SK-N-SH (cell line): ENCODE measurements at regions of chr2 and their contacts with region 1.

Region 1: GRCh38 chr2:174697255-174697654 is 67.0 kb downstream of the CHRNA1 start:
- DNase-seq: peak; percentile 80
- H3K4me3 ChIP-seq: no peak overlapping the region; a peak in 1 of 4 replicates
- H3K27ac ChIP-seq: no peak overlapping the region
- H3K4me1 ChIP-seq: peaks cover 0 to 5% of the 10 kb centered on the region in 2 experiments; a peak in 1 of 4 replicates
- H3K27me3 ChIP-seq: no peaks in the 10 kb centered on the region
- CTCF ChIP-seq: peak; percentile 89
- EP300 ChIP-seq: no peak
- RAD21 ChIP-seq: peak; percentile 78

Region 2: GRCh38 chr2:174577967-174578589 is 119.2 kb before region 1 on chr2:
- CTCF ChIA-PET with region 1: interaction called, 180 read pairs
- POLR2A ChIA-PET with region 1: no interaction called
- DNase-seq: peak; percentile 51
- H3K4me3 ChIP-seq: no peak overlapping the region
- H3K27ac ChIP-seq: peak overlapping the region; percentile 4 to 7; a peak in 3 of 4 replicates
- H3K4me1 ChIP-seq: no peaks in the 10 kb centered on the region; a peak in 2 of 4 replicates
- H3K27me3 ChIP-seq: no peaks in the 10 kb centered on the region
- CTCF ChIP-seq: peak; percentile 80
- EP300 ChIP-seq: no peak
- RAD21 ChIP-seq: peak; percentile 91

Region 3: GRCh38 chr2:174708713-174709112 is 11.5 kb after region 1 on chr2:
- CTCF ChIA-PET with region 1: interaction called, 55 read pairs
- POLR2A ChIA-PET with region 1: no interaction called
- DNase-seq: no peak
- H3K4me3 ChIP-seq: no peak overlapping the region
- H3K27ac ChIP-seq: no peak overlapping the region
- H3K4me1 ChIP-seq: no peaks in the 10 kb centered on the region
- H3K27me3 ChIP-seq: 0 out of 2 replicates have a peak, but pooled peaks cover 6% of the 10 kb centered on the region
- CTCF ChIP-seq: no peak
- EP300 ChIP-seq: no peak
- RAD21 ChIP-seq: no peak

Region 4: DNA sequence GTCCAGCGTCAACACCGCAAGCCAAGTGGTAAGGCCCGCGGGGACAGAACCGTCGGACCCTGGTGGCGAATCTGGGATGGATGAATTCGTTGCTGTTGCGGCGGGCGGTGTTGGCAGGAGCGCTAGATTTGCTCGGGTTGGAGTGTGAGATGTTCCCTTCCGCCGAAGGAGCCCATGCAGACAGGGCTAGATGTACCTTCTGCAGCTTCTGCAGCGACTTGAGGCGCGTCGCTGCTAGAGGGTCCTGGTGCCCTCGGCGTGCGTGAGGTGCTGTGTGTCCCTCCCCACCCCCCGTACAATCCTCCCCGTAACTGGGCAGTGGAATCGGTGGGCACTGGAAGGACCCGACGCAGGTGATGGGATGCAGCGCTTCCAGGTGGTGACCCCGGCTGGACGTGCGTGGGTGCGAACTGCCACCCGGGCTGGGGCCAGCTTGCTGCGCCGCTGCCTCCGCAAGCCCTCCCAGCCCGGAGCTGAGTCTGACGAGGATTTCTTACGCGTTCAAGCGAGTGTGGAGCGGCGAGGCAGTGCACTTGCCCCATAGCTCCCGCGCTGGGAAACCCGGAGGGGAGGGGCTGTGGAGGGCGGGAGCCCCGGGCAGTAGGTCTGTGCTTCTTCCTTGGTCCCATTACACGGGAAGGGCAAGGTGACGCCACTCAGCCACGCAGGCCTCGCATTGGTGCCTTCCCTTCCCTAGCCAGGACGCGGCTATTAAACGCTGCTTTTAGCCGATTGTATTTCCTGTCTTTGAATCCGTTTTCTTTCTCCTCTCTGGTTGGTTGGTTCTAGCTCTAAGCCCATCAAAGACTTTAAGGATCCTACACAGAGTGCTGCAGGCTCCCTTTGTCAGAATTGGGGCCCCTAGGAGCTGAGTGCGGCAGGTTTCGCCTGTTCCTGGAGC is 32.8 kb after region 1 on chr2:
- CTCF ChIA-PET with region 1: interaction called, 29 read pairs
- POLR2A ChIA-PET with region 1: no interaction called
- DNase-seq: peak; percentile 77
- H3K4me3 ChIP-seq: peak overlapping the region; percentile 40 to 50
- H3K27ac ChIP-seq: no peak overlapping the region
- H3K4me1 ChIP-seq: peaks cover 0 to 8% of the 10 kb centered on the region in 2 experiments; a peak in 1 of 4 replicates
- H3K27me3 ChIP-seq: peaks cover 21% of the 10 kb centered on the region; the same call in 1 of the 2 replicates
- CTCF ChIP-seq: no peak
- EP300 ChIP-seq: no peak
- RAD21 ChIP-seq: no peak

Region 5: DNA sequence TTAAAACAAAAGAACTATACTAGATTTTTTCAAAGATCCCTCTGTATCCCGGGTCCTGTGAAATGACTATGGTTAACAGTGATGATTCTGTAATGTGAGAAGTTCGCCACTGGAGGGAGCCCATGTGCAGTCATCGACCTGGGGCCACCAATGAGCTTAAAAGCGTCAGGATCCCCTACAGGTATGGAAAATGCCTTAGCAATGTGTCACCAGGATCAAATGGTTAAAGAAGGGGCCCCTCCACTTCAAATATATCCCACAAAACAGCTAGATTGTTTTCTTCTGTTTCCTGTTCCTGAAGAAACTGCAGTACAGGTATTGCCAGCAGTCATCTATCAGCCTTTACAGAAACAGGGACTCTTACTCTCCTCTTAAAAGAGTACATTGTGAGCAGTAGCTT is 51.7 kb after region 1 on chr2:
- CTCF ChIA-PET with region 1: interaction called, 23 read pairs
- POLR2A ChIA-PET with region 1: no interaction called
- DNase-seq: peak; percentile 77
- H3K4me3 ChIP-seq: no peak overlapping the region
- H3K27ac ChIP-seq: no peak overlapping the region
- H3K4me1 ChIP-seq: no peaks in the 10 kb centered on the region
- H3K27me3 ChIP-seq: no peaks in the 10 kb centered on the region
- CTCF ChIP-seq: peak; percentile 87
- EP300 ChIP-seq: no peak
- RAD21 ChIP-seq: peak; percentile 87

Region 6: DNA sequence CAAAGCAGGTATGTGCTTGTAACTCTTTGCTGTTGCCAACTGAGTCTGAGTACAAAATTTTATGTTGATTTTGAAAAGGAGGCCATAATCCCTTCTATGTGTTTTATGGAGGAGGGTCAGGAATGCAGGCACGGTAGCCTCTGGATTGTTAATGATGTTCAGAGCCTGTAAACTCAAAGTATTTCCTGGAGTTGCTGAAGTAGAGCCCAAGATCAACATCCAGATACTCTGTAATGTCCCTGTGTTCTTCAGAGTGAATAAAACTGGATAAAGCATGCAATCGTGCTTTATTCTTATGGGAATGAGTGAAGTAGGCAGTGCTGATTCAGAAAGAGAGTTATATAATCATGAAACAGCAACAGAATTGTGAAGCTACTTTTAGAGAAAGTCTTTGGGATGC is 128.8 kb after region 1 on chr2:
- CTCF ChIA-PET with region 1: no interaction called
- POLR2A ChIA-PET with region 1: no interaction called
- DNase-seq: no peak
- H3K4me3 ChIP-seq: no peak overlapping the region
- H3K27ac ChIP-seq: no peak overlapping the region
- H3K4me1 ChIP-seq: peaks cover 8 to 19% of the 10 kb centered on the region in 2 experiments; a peak in 2 of 4 replicates
- H3K27me3 ChIP-seq: no peaks in the 10 kb centered on the region
- CTCF ChIP-seq: no peak
- EP300 ChIP-seq: no peak
- RAD21 ChIP-seq: no peak

Region 7: DNA sequence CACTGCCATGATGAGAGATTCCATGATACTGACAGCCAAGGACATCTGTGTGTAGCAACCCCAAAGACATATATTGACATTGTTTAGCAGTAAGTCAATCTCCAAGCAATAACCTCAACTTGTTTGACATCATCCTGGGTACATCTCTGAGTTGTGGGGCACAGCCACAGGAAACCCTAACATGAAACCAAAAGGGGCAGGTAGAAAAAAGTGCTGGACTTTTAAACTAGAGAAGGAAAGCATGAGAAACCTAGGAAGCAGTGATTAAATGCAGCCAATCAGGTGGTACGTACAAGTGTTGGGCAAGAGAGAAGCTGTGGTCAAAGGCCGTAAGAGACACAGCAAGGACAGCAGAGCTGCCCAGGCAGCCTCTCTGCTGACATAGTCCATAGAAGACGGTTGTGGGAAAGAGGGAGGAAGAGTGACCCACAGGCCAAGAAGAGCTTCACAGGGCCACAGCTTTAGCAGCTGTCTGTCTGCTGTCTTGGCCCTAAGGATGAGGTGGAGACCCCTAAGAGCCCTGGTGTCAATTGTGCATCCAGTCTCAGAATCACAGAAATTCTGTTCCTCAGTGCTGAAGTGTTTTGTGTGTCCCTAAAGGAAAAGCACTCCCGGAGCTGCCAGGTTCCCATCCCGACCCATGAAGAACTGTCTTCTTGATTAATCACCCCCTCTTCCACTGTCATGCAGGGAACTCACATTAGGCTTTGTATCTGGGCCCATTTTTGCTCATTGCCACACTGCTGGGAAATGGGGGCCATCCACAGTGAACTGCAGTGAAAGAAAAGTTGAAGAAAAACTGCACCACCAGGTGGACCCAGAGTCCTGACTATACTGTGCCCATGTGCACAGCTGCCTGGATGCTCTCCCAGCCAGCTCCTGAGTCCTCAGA is 333.4 kb after region 1 on chr2:
- CTCF ChIA-PET with region 1: interaction called, 12 read pairs
- POLR2A ChIA-PET with region 1: no interaction called
- DNase-seq: peak; percentile 33
- H3K4me3 ChIP-seq: no peak overlapping the region; a peak in 1 of 4 replicates
- H3K27ac ChIP-seq: no peak overlapping the region
- H3K4me1 ChIP-seq: no peaks in the 10 kb centered on the region
- H3K27me3 ChIP-seq: no peaks in the 10 kb centered on the region
- CTCF ChIP-seq: peak; percentile 50
- EP300 ChIP-seq: no peak
- RAD21 ChIP-seq: peak; percentile 75

Region 8: DNA sequence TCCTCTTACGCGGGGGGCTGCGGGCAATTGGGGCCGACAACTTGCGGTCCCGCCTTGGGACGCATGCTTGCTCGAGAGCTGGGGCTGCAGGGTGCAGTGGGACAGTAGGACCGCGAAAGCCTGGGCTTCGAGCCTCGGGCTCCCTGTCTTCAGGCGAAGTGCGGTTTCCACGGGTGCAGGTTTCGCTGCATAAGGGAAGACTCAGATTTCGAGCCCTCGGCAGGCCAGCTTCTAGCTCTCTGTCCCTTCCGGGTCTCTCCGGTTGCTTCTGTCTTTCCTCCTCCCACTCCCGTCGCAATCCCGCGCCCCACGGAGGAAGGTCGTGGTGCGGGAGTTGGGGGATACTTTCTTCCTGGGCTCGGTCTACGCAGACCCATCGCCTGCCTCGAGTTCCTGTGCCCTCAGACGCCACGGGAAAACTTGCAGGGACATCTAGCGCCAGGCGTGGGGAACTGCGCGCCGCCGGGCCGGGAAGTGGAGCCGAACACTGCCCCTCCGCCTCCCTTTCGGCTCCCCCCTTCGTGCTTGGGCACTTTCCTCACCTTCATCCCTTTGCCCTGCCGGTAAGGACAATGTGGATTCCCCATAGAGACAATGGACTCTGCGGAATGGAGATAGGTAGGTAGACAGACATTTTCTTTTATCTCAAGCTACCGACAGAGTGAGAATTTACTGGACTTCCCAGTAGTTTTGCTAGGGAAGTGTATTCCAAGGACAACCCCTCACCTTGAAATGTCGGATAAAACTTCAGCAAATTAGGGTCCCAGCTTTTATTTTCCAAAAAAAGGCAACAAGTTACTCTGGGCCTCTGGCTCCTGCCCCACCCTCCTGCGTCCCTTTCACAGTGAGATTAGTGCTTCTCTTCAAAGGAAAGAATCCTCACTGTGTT is 1391.0 kb after region 1 on chr2:
- CTCF ChIA-PET with region 1: interaction called, 11 read pairs
- POLR2A ChIA-PET with region 1: no interaction called
- DNase-seq: peak; percentile 86
- H3K4me3 ChIP-seq: peak overlapping the region; percentile 40 to 52
- H3K27ac ChIP-seq: no peak overlapping the region
- H3K4me1 ChIP-seq: peaks cover 0 to 24% of the 10 kb centered on the region in 2 experiments; a peak in 1 of 4 replicates
- H3K27me3 ChIP-seq: peaks cover 95% of the 10 kb centered on the region
- CTCF ChIP-seq: peak; percentile 78
- EP300 ChIP-seq: no peak
- RAD21 ChIP-seq: peak; percentile 75